Left ventricle myocardium inferior (tissue), 1 donor: ENCODE measurements at regions of chr17 and their contacts with region 1.

Region 1: GRCh38 chr17:58447039-58447975 is 30.0 kb upstream of the RNF43 start:
- DNase-seq: peak; percentile 53
- H3K4me3 ChIP-seq: no peak overlapping the region
- H3K27ac ChIP-seq: no peak overlapping the region
- H3K4me1 ChIP-seq: no peaks in the 10 kb centered on the region
- H3K27me3 ChIP-seq: peaks cover 17% of the 10 kb centered on the region
- CTCF ChIP-seq: peak; percentile 72

Region 2: DNA sequence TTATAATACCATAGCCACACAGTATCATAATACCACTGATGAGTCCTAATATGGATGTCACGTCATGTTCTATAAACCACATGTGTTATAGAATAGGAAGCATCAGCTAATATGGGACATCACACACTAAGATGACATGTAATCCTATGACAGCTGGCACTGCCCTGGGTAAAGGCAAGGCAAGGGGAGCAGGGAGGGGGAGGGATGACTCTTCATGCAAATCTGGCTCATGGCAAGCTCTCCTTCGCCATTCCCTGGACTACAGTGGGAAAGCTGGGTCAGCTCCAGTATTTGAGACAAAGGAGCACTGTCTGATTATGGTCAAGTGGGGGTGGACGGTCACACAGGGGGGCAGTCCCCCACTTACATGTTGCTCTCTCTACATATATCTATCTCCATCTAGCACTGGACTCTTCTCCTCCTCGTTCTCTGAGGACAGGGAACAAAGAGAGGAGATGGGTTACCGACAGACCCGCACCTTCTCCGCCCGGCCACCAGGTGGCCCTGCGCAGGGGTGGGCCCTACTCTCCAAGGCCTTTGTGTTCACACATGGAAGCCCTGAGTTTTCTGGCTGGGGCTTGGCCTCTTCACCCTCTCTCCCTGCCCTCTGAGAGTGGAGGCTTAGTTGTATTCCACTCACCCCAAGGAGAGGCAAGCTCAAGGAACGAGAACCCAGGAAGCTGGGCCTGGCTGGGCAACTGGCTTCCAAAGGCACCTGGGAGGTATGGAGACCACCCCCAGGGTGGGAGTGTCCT is 143.2 kb before region 1 on chr17:
- intact Hi-C with region 1: loop called (anchors 10 kb)
- DNase-seq: peak; percentile 40
- H3K4me3 ChIP-seq: no peak overlapping the region
- H3K27ac ChIP-seq: no peak overlapping the region
- H3K4me1 ChIP-seq: no peaks in the 10 kb centered on the region
- H3K27me3 ChIP-seq: peaks cover 26% of the 10 kb centered on the region
- CTCF ChIP-seq: peak; percentile 70

Region 3: DNA sequence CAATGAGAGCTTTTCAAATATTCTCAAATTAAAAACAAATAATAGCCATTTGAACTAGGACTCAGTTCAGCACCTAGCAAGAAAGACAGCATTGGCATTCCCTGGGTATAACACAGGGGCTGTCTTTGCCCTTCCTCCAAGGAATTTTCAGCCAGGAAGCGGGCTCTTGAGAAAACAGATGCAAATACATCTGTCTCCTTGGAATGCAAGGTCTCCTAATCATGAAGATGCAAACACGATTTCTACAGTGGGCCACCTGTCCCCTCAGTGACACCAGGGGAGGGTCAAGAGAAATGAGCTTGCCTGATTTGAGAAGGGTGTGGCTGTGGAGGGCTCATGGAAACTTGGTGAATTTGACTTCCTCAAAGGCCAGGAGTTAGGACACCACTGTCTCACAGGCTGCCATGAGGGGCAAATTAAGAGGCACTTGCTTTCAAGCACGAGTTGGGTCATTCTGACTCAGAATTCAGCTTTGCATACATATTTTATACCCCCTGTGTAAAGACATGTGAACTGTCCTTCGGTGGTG is 70.8 kb before region 1 on chr17:
- intact Hi-C with region 1: no loop called
- DNase-seq: no peak
- H3K4me3 ChIP-seq: no peak overlapping the region
- H3K27ac ChIP-seq: no peak overlapping the region
- H3K4me1 ChIP-seq: no peaks in the 10 kb centered on the region
- H3K27me3 ChIP-seq: no peaks in the 10 kb centered on the region
- CTCF ChIP-seq: no peak